Mammary epithelial cell (primary cell): ENCODE measurements at regions of chr2 and their contacts with region 1.

Region 1: DNA sequence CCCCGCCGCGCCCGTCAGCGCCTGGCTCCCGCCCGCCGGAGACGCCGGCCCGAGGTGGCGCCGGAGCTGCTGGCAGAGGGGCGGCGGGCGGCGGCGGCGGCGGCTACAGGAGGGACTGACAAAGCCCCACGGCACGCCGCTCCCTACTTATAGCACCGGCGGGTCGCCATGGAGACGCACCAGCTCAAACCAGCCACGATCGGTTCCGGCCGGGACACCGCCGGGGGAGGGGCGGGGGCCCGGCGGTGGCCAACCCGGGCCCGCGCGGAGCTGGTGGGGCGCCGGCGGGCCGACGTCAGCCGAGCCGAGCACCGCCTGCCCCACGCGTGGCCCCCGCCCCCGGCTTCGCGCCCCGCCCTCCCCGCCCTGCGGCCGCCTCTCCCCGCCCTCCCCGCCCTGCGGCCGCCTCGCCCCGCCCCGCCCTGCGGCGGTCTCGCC is at the start of gene ODC1:
- DNase-seq: peak; percentile 88
- H3K4me3 ChIP-seq: peak within 1 kb of the TSS; percentile 46 to 61 (median 61)
- H3K27ac ChIP-seq: peak within 1 kb of the TSS; percentile 45
- H3K4me1 ChIP-seq: peaks cover 31% of the 10 kb centered on the region
- H3K27me3 ChIP-seq: no peaks in the 10 kb centered on the region
- CTCF ChIP-seq: no peak
- total RNA-seq, gene ODC1: 64.0 to 161 TPM

Region 2: GRCh38 chr2:10028988-10029874 is 419.0 kb before region 1 on chr2:
- CTCF ChIA-PET with region 1: no interaction called
- dilution Hi-C with region 1: no loop called
- in situ Hi-C with region 1: no loop called
- intact Hi-C with region 1: no loop called
- DNase-seq: no peak
- H3K4me3 ChIP-seq: no peak overlapping the region
- H3K27ac ChIP-seq: no peak overlapping the region
- H3K4me1 ChIP-seq: no peaks in the 10 kb centered on the region
- H3K27me3 ChIP-seq: no peaks in the 10 kb centered on the region
- CTCF ChIP-seq: no peak

Region 3: GRCh38 chr2:10408649-10409579 is 39.3 kb before region 1 on chr2:
- CTCF ChIA-PET with region 1: interaction called, 32 read pairs
- dilution Hi-C with region 1: no loop called
- in situ Hi-C with region 1: no loop called
- intact Hi-C with region 1: no loop called
- DNase-seq: peak; percentile 73
- H3K4me3 ChIP-seq: no peak overlapping the region
- H3K27ac ChIP-seq: peak overlapping the region; percentile 98
- H3K4me1 ChIP-seq: peaks cover 74% of the 10 kb centered on the region
- H3K27me3 ChIP-seq: no peaks in the 10 kb centered on the region
- CTCF ChIP-seq: peak; percentile 79 to 99

Region 4: DNA sequence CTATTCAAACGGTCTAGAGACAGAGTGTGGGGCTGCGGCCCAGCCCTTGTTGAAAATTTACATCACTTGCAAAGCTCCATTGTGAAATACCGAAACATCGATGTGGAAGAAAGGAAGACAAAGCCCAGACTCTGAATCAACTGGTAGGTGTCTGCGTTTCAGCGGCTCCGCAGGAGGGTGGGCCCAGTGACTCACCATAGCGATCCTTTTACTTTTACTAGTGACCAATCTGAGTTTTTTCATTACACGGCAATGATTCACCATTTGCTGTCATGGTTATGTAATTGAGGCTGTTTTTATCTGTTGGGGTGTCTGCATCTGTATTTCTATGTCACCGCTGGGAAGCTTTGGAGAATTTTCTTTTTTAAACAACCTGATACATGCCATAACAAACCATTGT is 66.5 kb after region 1 on chr2:
- CTCF ChIA-PET with region 1: no interaction called
- dilution Hi-C with region 1: no loop called
- in situ Hi-C with region 1: no loop called
- intact Hi-C with region 1: loop called (anchors 1 kb)
- DNase-seq: peak; percentile 98
- H3K4me3 ChIP-seq: no peak overlapping the region
- H3K27ac ChIP-seq: peak overlapping the region; percentile 95
- H3K4me1 ChIP-seq: peaks cover 17% of the 10 kb centered on the region
- H3K27me3 ChIP-seq: no peaks in the 10 kb centered on the region
- CTCF ChIP-seq: no peak

Region 5: GRCh38 chr2:10538224-10538894 is 90.1 kb after region 1 on chr2:
- CTCF ChIA-PET with region 1: no interaction called
- dilution Hi-C with region 1: no loop called
- in situ Hi-C with region 1: no loop called
- intact Hi-C with region 1: loop called (anchors 2 kb)
- DNase-seq: peak; percentile 92
- H3K4me3 ChIP-seq: no peak overlapping the region
- H3K27ac ChIP-seq: peak overlapping the region; percentile 30
- H3K4me1 ChIP-seq: peaks cover 14% of the 10 kb centered on the region
- H3K27me3 ChIP-seq: no peaks in the 10 kb centered on the region
- CTCF ChIP-seq: no peak

Region 6: DNA sequence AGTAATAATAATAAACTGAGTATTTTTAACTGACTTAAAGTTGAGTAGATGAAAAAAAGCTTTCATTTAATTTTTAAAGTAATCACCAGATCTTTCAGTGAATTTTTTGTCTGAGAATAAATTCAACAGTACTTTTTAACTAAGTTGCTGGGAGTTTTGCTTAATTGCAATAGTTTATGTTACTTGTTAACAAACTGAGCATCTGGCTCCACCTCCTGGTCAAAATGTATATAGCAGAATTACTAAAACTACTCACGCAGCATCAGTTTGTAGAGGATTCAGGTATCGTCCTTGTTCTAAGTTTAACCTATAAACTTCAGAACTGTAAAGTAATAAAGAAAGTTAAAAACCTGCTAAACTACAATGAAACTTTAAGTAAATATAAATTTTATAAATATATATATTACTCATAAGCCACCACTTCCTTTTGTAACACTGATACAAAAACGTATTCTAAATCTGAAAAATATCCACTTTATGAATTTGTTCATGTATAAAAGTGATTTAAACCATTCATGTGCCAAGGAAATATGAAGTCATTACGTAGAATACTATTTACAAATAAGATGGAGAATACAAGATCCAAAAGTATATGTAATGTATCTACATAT is 220.3 kb after region 1 on chr2:
- CTCF ChIA-PET with region 1: no interaction called
- dilution Hi-C with region 1: loop called (anchors 5 kb)
- in situ Hi-C with region 1: loop called in 1 of 2 experiments (anchors 10 kb)
- intact Hi-C with region 1: no loop called
- DNase-seq: peak; percentile 39
- H3K4me3 ChIP-seq: no peak overlapping the region
- H3K27ac ChIP-seq: no peak overlapping the region
- H3K4me1 ChIP-seq: no peaks in the 10 kb centered on the region
- H3K27me3 ChIP-seq: no peaks in the 10 kb centered on the region
- CTCF ChIP-seq: peak; percentile 61 to 68